ENCODE measurements at regions of chr1 and their contacts with region 1.

Region 1: DNA sequence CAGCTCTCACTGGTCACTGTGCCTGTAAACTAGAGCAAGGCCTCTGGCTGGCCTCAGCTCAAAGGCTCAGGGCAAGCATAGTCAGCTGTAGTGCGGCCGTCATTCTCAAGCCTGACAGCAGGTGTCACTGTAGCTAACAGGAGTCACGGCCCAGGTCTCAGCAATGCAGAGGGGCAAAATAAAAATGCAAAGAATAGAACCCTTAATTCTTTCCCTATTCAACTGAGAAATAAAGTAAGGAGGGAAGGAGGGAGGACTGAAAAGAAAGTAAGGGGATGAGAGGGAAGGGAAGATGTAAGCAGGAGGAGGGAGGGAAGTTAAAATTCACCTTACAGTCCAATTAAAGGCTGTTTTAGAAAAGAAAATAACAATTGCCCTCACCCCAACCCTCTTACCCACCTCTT is 106.1 kb downstream of the KIAA0319L start:
- DNase-seq: peak; percentile 70 to 84 (median 74)
- ATAC-seq: peak; percentile 99
- H3K4me3 ChIP-seq: no peak overlapping the region
- H3K27ac ChIP-seq: no peak overlapping the region
- H3K4me1 ChIP-seq: no peaks in the 10 kb centered on the region
- H3K27me3 ChIP-seq: no peaks in the 10 kb centered on the region
- CTCF ChIP-seq: peak; percentile 90 to 94 (median 92)
- EP300 ChIP-seq: no peak
- POLR2A ChIP-seq: no peak
- RAD21 ChIP-seq: peak; percentile 84 to 95

Region 2: GRCh38 chr1:34896613-34897012 is 554.5 kb before region 1 on chr1:
- CTCF ChIA-PET with region 1: no interaction called
- POLR2A ChIA-PET with region 1: no interaction called
- in situ Hi-C with region 1: no loop called
- intact Hi-C with region 1: no loop called
- DNase-seq: no peak
- ATAC-seq: peak; percentile 42; the same call in 1 of the 3 replicates
- H3K4me3 ChIP-seq: no peak overlapping the region
- H3K27ac ChIP-seq: no peak overlapping the region
- H3K4me1 ChIP-seq: no peaks in the 10 kb centered on the region
- H3K27me3 ChIP-seq: peaks cover 22 to 24% of the 10 kb centered on the region in 2 experiments
- CTCF ChIP-seq: peak in 1 of 3 experiments; percentile 49; a peak in 2 of 6 replicates
- EP300 ChIP-seq: no peak
- POLR2A ChIP-seq: no peak
- RAD21 ChIP-seq: peak; percentile 30 to 50

Region 3: DNA sequence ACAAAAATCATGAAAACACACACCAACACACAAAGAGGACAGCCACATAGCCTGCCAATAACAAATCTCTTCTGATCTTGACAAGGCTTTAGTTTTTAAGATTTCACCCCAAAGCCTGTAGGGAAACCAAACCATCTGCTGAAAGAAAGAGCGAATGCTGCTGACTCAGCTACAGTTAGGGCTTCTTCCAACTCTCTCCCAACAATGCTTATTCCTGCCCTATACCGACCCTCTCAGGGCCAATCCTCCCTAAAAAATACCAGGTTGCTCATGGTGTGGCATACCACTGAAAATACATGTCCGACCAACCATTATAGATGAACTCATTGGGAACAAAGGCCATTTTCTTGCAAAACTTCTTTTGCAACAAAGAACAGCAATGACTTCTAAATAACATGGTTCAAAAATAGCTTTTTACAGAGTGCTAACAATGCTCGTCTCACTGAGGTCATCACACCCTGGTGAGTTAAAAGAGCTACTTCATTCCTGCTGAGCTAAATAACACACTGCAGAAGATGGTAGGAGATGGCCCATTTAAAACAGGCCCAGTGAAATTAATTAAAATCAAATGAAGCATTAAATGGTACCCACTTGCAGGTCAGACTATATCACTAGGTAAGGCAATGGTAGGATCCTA is 20.0 kb after region 1 on chr1:
- CTCF ChIA-PET with region 1: no interaction called
- POLR2A ChIA-PET with region 1: no interaction called
- in situ Hi-C with region 1: no loop called
- intact Hi-C with region 1: no loop called
- DNase-seq: no peak
- ATAC-seq: no peak
- H3K4me3 ChIP-seq: no peak overlapping the region
- H3K27ac ChIP-seq: no peak overlapping the region
- H3K4me1 ChIP-seq: no peaks in the 10 kb centered on the region
- H3K27me3 ChIP-seq: no peaks in the 10 kb centered on the region
- CTCF ChIP-seq: no peak
- EP300 ChIP-seq: no peak
- POLR2A ChIP-seq: no peak
- RAD21 ChIP-seq: no peak

Region 4: DNA sequence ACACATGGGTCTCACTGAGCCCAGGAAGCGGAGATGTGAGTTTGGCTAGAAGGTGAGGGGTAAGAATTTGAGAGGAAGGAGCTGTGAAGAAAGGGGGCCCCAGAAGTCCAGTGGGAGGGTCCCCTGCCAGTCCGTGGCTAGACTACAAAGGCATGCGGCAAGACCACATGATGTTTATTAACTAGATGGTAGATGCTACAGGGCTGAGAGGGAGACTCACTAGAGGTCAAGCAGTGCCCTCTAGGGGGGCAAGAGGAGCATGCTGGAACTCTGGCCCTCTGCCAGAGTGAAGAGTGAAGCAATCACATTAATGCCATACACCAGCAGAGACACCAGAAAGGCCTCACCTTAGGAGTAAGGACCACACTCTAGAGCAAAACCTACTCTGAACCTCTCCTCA is 93.9 kb after region 1 on chr1:
- CTCF ChIA-PET with region 1: interaction called, 40 read pairs
- POLR2A ChIA-PET with region 1: interaction called, 3 read pairs
- in situ Hi-C with region 1: no loop called
- intact Hi-C with region 1: loop called (anchors 1 kb)
- DNase-seq: peak; percentile 67 to 87 (median 79)
- ATAC-seq: peak; percentile 95
- H3K4me3 ChIP-seq: no peak overlapping the region
- H3K27ac ChIP-seq: no peak overlapping the region
- H3K4me1 ChIP-seq: no peaks in the 10 kb centered on the region; a peak in 1 of 5 replicates
- H3K27me3 ChIP-seq: no peaks in the 10 kb centered on the region
- CTCF ChIP-seq: peak; percentile 79 to 92 (median 84)
- EP300 ChIP-seq: no peak
- POLR2A ChIP-seq: no peak
- RAD21 ChIP-seq: peak; percentile 59 to 88

Region 5: DNA sequence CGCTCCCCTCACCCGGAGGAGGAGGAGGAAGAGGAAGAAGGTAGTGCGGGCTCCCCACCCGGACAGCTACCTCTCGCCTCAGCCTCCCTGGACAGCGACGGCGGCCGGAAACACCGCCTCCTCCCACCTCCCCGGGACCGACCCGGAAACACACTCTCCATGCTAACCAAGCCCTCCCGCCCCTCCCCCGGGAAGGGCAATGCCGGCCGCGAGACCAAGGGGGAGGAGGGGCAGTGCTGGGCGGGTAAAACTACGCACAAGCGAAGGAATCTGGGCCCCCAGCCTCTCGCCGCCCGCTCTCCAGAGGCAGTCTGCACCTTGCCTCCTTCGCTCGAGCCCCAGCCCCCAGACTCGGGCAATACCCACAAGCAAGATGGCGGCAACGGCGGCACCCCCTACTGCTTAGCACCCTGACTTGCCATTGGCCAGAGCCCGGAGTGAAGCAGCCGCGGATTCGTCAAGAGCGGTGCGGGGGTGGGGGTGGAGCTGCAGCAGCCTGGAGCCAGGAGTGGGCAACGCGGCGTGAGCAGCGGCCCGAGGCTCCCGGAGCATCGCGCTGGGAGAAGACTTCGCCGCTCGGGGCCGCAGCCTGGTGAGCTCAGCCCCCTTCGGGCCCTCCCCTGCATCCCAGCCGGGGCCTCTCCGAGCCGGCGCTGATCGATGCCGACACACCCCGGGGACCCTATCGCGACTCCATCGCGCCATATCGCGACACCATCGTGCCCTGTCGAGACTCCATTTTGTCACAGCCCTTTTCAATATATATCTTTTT is 106.4 kb after region 1 on chr1 and contains the starts of genes KIAA0319L and NCDN:
- CTCF ChIA-PET with region 1: no interaction called
- POLR2A ChIA-PET with region 1: interaction called, 10 read pairs
- in situ Hi-C with region 1: loop called (anchors 5 kb)
- intact Hi-C with region 1: no loop called
- DNase-seq: peak; percentile 98 to 99 (median 98)
- ATAC-seq: peak; percentile 94
- H3K4me3 ChIP-seq: peak within 1 kb of the TSS; percentile 91
- H3K27ac ChIP-seq: peak within 1 kb of the TSS; percentile 98
- H3K4me1 ChIP-seq: peaks cover 19 to 39% of the 10 kb centered on the region in 2 experiments
- H3K27me3 ChIP-seq: no peaks in the 10 kb centered on the region
- CTCF ChIP-seq: no peak; a peak in 1 of 6 replicates
- EP300 ChIP-seq: no peak; the same call in 1 of the 2 replicates
- POLR2A ChIP-seq: peak; percentile 94
- RAD21 ChIP-seq: no peak
- polyA plus RNA-seq, gene KIAA0319L: 2.4 to 5.9 TPM
- polyA plus RNA-seq, gene NCDN: 1.9 to 2.6 TPM

Region 6: GRCh38 chr1:35564037-35564883 is 113.1 kb after region 1 on chr1:
- CTCF ChIA-PET with region 1: interaction called, 17 read pairs
- POLR2A ChIA-PET with region 1: interaction called, 6 read pairs
- in situ Hi-C with region 1: loop called (anchors 5 kb)
- intact Hi-C with region 1: loop called (anchors 1 kb)
- DNase-seq: peak; percentile 85 to 92 (median 86)
- ATAC-seq: peak; percentile 88
- H3K4me3 ChIP-seq: no peak overlapping the region
- H3K27ac ChIP-seq: no peak overlapping the region
- H3K4me1 ChIP-seq: peaks cover 0 to 25% of the 10 kb centered on the region in 2 experiments; a peak in 2 of 5 replicates
- H3K27me3 ChIP-seq: no peaks in the 10 kb centered on the region
- CTCF ChIP-seq: peak; percentile 91 to 94 (median 93)
- EP300 ChIP-seq: no peak
- POLR2A ChIP-seq: no peak
- RAD21 ChIP-seq: peak; percentile 59 to 85

Region 7: GRCh38 chr1:35715568-35716002 is 264.5 kb after region 1 on chr1:
- CTCF ChIA-PET with region 1: no interaction called
- POLR2A ChIA-PET with region 1: interaction called, 3 read pairs
- in situ Hi-C with region 1: loop called (anchors 5 kb)
- intact Hi-C with region 1: loop called (anchors 5 kb)
- DNase-seq: peak; percentile 74 to 90 (median 82)
- ATAC-seq: peak; percentile 77
- H3K4me3 ChIP-seq: no peak overlapping the region
- H3K27ac ChIP-seq: no peak overlapping the region
- H3K4me1 ChIP-seq: peaks cover 19 to 23% of the 10 kb centered on the region in 2 experiments; a peak in 4 of 5 replicates
- H3K27me3 ChIP-seq: no peaks in the 10 kb centered on the region
- CTCF ChIP-seq: peak; percentile 92 to 98 (median 94)
- EP300 ChIP-seq: no peak
- POLR2A ChIP-seq: no peak
- RAD21 ChIP-seq: peak; percentile 79 to 90

Region 8: DNA sequence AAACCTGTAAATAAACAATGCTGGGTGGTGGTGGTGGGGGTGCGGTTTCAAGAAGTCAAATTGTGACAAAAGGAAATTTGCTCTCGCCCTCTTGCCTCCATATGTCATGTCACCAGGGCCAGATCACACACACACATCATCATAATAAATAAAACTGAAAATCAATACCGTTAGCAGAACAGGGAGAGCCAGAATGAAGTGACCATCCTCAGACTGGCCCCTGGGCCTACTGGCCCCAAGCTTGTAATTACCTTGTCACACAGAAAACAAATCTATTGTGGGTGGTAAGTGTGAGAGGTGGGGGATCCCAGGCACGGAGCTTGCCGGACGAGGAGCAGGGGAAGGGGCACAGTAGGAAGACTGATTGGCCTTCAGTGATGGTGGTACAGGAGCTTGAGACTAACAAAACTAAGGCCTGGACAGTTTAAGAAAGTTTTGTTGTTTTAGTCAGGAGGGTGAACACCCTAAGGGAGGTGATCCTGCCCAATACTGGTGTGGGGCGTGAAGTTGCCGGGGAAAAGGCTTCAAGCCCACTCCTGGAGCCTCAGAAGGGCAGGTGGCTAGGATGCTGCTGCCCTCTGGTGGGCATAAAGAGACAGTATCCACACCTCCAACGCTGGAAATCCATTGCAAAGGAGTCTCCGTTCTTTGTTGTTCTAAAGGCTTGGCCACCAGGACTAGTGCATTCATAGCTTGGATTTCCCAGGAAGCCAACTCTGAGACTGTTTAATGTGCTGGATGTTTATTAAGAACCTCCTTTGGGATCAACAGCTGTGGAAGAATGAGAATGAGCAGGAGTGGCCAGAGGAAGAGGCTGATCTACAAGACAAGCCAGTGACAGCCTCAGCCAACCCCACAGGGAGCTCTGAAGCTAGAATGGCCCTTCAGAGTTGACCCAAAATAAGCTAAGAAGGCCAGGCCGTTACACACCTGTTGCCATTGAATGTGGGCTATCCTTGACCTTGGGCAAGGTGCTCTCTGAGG is 275.6 kb after region 1 on chr1:
- CTCF ChIA-PET with region 1: interaction called, 13 read pairs
- POLR2A ChIA-PET with region 1: no interaction called
- in situ Hi-C with region 1: loop called (anchors 5 kb)
- intact Hi-C with region 1: no loop called
- DNase-seq: peak; percentile 70 to 77 (median 74)
- ATAC-seq: peak; percentile 97
- H3K4me3 ChIP-seq: no peak overlapping the region
- H3K27ac ChIP-seq: no peak overlapping the region
- H3K4me1 ChIP-seq: no peaks in the 10 kb centered on the region
- H3K27me3 ChIP-seq: no peaks in the 10 kb centered on the region
- CTCF ChIP-seq: peak; percentile 86 to 95 (median 94)
- EP300 ChIP-seq: no peak
- POLR2A ChIP-seq: no peak
- RAD21 ChIP-seq: peak; percentile 83 to 91

Region 9: DNA sequence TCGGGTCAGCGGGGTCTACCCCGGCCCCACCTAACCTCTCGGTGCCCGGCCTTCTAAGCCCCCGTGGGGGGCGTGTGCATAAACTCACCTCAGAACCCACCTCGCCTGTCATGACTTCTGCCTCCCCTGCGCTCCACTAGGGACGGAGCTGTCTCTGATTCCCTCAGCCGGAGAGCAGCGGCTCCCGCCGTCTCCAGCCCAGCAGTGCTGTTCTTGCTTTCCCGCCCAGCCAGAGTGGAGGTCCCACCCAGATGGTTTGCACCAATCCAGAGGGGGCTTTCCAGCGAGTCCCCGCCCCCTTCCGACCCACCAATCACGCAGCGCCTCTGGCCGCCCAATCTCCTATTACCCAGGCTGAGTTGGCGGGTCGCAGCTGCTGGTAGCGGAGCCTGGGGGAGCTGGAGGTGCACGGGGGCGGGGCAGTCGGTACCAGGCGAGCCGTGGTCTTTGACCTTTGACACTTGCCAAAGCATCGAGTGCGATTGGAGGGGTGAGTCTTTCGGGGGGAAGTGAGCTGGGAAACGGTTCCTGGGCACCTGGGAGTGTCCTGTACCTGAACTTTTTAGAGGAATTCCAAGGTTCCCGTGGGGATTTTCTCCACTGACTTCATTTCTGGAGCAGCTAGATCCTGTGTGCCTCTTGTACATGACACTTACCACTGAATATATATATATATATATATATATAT is 318.8 kb after region 1 on chr1 and contains the start of gene CLSPN:
- CTCF ChIA-PET with region 1: interaction called, 16 read pairs
- POLR2A ChIA-PET with region 1: interaction called, 4 read pairs
- in situ Hi-C with region 1: no loop called
- intact Hi-C with region 1: loop called (anchors 1 kb)
- DNase-seq: peak; percentile 99 to 100 (median 99)
- ATAC-seq: peak; percentile 95
- H3K4me3 ChIP-seq: peak within 1 kb of the TSS; percentile 66
- H3K27ac ChIP-seq: peak within 1 kb of the TSS; percentile 89
- H3K4me1 ChIP-seq: peaks cover 2 to 28% of the 10 kb centered on the region in 2 experiments; a peak in 3 of 5 replicates
- H3K27me3 ChIP-seq: no peaks in the 10 kb centered on the region
- CTCF ChIP-seq: 0 out of 6 replicates have a peak, but pooled peaks of 1 of the 3 experiments have one; percentile 10
- EP300 ChIP-seq: no peak
- POLR2A ChIP-seq: peak; percentile 99
- RAD21 ChIP-seq: no peak
- polyA plus RNA-seq, gene CLSPN: 23.1 to 27.0 TPM

Measured in K562 (cell line).